AG04449 (cell line): ENCODE measurements at regions of chr1 and their contacts with region 1.

Region 1: GRCh38 chr1:181189691-181190363 is 101.3 kb downstream of the IER5 start:
- DNase-seq: no peak
- H3K4me3 ChIP-seq: peak overlapping the region; percentile 41
- CTCF ChIP-seq: peak; percentile 95

Region 2: DNA sequence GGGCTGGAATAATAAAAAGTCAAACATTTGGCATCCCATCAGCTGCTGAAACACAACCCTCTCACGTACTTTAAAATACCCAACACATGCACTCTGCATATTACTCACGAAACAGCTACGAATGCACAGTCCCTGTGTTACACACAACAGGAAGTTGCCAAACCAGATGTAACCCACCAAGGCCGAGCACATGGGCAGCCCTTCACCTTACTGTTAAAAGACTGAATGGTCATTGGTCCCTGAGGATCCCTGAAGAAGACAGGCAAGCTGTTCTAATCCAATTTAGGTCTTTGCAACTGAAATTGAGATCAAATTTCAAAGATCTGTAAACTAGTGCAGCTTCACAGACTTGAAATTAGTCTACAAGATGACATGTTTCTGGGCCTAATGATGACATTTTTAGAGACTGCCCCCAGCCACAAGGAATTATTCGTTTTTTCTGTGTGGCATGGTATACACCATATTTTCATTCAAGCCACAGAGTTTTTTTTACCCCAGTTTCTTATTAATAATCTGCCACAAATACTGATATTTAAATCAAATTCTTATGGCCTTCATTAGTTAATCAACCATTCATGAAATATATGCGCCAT is 126.9 kb before region 1 on chr1:
- CTCF ChIA-PET with region 1: no interaction called
- POLR2A ChIA-PET with region 1: no interaction called
- DNase-seq: peak; percentile 41
- H3K4me3 ChIP-seq: no peak overlapping the region
- CTCF ChIP-seq: no peak

Region 3: DNA sequence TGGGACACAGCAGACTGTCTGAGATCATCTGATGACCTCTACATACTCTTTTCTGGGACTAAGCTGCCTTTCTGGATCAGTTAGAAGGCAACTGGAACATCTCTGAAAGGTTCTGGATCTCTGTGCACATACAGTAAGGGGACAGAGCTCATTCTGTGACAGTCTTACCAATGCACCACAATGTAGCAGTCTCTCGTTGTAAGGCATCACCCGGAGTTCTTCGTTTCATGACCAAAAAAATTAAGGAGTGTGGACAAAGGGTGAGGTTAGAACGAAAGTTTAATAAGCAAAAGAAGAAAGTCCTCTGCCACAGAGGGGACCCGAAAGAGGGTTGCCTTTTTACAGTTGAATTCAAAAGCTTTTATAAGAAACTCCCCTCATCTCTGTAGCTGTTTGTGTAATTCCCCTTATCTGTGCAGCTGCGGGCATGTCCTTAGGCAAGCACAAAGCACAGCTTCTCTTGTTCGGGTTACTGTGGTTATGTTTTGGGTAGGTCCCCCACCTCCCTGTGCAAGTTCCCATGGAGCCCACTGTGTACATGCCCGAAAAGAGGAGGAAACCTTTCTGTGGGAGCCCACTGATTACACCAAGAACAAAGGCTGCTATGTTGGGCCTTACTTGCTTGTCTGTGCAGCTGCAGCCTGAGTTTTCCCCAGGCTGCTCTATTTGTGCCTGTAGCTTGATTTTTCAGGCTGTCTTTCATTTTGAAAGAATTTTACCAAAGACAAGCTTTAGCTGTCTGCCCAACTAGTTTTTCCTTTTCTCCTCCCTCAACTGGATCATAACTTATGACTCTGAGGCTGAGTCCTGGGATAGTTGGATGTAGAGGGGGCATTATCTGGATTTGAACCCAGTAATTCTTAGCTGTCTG is 240.4 kb after region 1 on chr1:
- CTCF ChIA-PET with region 1: interaction called, 131 read pairs
- POLR2A ChIA-PET with region 1: no interaction called
- DNase-seq: no peak
- H3K4me3 ChIP-seq: no peak overlapping the region
- CTCF ChIP-seq: no peak